Heart left ventricle (tissue), 16 donors: ENCODE measurements at regions of chr17 and their contacts with region 1.

Region 1: GRCh38 chr17:5065227-5065744 is 13.0 kb upstream of the ZFP3 start:
- DNase-seq: no peak
- ATAC-seq: no peak
- H3K4me3 ChIP-seq: no peak overlapping the region
- H3K27ac ChIP-seq: no peak overlapping the region
- H3K4me1 ChIP-seq: no peaks in the 10 kb centered on the region
- H3K27me3 ChIP-seq: no peaks in the 10 kb centered on the region
- CTCF ChIP-seq: no peak
- POLR2A ChIP-seq: no peak

Region 2: DNA sequence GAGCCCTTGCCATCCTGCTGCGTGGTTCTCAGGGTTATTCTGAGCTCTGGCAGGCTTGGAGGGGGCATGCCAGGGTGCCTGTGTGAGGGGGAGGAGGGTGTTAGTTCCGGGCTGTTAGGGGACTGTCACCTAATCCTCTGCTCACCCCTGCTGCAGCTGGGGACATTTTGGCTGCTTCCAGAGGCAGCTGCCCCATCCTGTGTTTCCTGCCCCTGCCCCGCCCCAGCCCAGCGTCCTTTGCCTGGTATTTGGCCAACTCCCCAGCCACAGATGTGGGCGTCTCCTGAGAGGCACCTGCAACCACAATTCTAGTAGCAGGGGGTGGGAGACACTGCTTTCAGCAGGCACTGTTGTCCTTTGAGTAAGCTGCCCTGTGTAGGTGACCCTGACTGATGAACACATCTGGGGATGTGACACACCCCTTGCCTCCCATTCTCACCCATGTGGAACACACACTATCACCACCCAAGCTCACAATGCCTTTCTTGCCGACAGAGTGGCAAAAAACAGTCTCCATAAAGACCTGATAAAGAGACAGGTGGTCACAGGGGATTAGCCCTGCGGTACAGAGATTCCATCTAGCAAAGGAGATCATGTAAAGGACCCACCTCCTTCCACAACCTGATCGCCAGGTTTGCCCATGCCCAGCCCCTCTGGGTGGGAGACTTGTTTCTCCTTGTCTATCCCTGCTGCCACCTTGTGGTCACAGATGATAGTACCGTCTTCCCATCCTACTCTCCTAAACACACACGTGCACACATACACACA is 162.1 kb before region 1 on chr17 and contains the start of gene CHRNE:
- intact Hi-C with region 1: loop called in 7 of 10 experiments (anchors 2 to 10 kb)
- DNase-seq: peak in 4 of 5 donors; percentile 72 to 76 (median 74)
- ATAC-seq: peak in 2 of 4 donors; percentile 35 to 46
- H3K4me3 ChIP-seq: peak within 1 kb of the TSS in 7 of 12 donors; percentile 6 to 57 (median 26)
- H3K27ac ChIP-seq: peak within 1 kb of the TSS in 7 of 12 donors; percentile 33 to 77 (median 63)
- H3K4me1 ChIP-seq: peaks cover 0 to 42% (median 24%) of the 10 kb centered on the region in 12 donors
- H3K27me3 ChIP-seq: peaks cover 0 to 32% (median 11%) of the 10 kb centered on the region in 9 donors
- CTCF ChIP-seq: peak; percentile 68 to 85 (median 74)
- POLR2A ChIP-seq: no peak
- total RNA-seq, gene CHRNE: 0.23 to 1.4 (median 0.48) TPM

Region 3: DNA sequence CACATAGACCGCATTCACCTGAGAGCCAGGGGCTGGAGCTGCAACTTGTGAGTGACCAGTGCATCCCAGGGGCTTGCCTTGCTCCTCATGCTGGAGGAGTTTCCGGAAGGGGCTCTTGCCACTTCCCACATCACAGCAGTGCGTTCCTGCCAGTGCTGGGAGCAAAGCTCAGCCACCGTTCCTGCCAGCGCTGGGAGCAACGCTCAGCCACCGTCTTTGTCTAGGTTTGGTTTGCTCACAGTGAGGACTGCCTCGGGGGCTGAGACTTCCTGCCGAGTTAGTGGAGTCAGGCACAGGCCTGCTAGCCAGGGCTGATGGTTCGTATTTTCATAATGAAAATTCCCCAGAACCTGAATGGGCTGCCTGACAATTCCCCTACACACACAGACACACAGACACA is 157.0 kb before region 1 on chr17:
- intact Hi-C with region 1: loop called (anchors 1 to 10 kb)
- DNase-seq: no peak
- ATAC-seq: peak in 2 of 4 donors; percentile 41 to 48
- H3K4me3 ChIP-seq: no peak overlapping the region
- H3K27ac ChIP-seq: peak overlapping the region in 9 of 12 donors; percentile 1 to 75 (median 60)
- H3K4me1 ChIP-seq: peaks cover 0 to 20% (median 10%) of the 10 kb centered on the region in 12 donors
- H3K27me3 ChIP-seq: no peaks in the 10 kb centered on the region
- CTCF ChIP-seq: no peak
- POLR2A ChIP-seq: no peak

Region 4: DNA sequence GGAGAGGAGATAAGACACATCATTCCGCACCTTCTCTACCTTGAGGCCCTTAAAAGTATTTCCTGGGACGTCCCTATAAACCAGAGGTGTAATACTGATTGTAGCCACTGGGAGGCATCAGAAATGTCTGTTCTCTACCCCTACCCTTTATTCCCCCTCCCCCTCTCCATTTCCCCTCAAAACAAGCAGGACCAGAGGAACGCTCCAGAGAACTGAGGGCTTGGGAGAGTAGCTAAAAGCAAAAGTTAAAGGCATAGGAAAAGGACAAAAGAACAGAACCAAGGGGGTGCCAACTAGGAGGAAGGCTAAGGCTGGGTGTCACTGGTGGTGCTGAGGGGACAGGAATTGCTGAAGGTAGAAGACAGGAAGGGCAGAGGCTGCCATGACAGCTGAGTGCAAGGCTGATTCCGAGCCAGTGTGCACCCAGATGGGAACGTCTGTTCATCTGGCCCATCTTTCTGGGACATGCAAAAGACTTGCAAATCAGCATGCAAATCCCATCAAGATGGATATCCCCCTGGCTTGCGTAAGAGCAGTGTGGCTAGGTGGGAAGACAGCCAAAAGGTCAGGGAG is 84.6 kb before region 1 on chr17:
- intact Hi-C with region 1: loop called in 9 of 10 experiments (anchors 2 to 5 kb)
- DNase-seq: no peak
- ATAC-seq: peak in 3 of 4 donors; percentile 48 to 59 (median 53)
- H3K4me3 ChIP-seq: no peak overlapping the region
- H3K27ac ChIP-seq: no peak overlapping the region
- H3K4me1 ChIP-seq: peaks cover 0 to 43% (median 1%) of the 10 kb centered on the region in 12 donors
- H3K27me3 ChIP-seq: no peaks in the 10 kb centered on the region
- CTCF ChIP-seq: peak; percentile 62 to 77 (median 68)
- POLR2A ChIP-seq: no peak

Region 5: DNA sequence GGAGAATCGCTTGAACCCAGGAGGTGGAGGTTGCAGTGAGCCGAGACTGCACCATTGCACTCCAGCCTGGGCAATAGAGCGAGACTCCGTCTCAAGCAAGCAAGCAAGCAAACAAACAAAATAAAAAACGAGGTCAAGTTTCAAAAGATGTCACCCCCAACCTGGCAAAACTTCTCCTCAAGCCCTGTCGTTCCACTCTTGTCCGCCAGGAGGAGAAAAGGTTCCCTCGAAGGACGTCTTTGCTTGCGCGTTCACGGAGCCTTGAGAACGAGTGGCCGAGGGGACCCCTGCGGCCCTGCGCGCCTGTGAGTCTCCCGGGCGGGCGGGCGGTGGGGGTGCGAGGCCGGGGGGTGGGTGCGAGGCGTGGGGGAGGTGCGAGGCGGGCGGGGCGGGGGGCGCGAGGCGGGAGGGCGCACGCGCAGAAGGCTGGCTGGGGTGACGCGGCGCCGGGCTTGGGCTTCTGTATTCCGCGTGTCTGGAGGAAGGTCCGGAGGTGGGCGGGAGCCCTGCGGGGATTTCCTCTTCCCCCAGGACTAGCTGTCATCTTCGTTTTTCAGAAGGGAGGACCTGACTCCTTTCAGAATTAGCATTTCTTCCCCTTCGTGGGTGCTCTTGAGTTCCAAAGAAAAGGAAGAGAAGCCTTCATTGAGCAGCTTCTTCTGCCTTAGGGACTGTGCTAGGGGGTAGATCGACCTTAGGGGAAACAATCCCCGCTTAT is 33.8 kb before region 1 on chr17:
- intact Hi-C with region 1: loop called in 8 of 10 experiments (anchors 1 to 5 kb)
- DNase-seq: peak; percentile 76 to 89 (median 83)
- ATAC-seq: peak; percentile 19 to 81 (median 77)
- H3K4me3 ChIP-seq: peak overlapping the region in 11 of 12 donors; percentile 30 to 64 (median 54)
- H3K27ac ChIP-seq: peak overlapping the region in 7 of 12 donors; percentile 22 to 54 (median 40)
- H3K4me1 ChIP-seq: peaks cover 0 to 20% (median 3%) of the 10 kb centered on the region in 12 donors
- H3K27me3 ChIP-seq: peaks cover 0 to 19% (median 4%) of the 10 kb centered on the region in 9 donors
- CTCF ChIP-seq: peak; percentile 65 to 83 (median 78)
- POLR2A ChIP-seq: no peak

Region 6: GRCh38 chr17:5181509-5182305 is 116.4 kb after region 1 on chr17:
- intact Hi-C with region 1: no loop called
- DNase-seq: no peak
- ATAC-seq: no peak
- H3K4me3 ChIP-seq: no peak overlapping the region
- H3K27ac ChIP-seq: no peak overlapping the region
- H3K4me1 ChIP-seq: no peaks in the 10 kb centered on the region
- H3K27me3 ChIP-seq: no peaks in the 10 kb centered on the region
- CTCF ChIP-seq: no peak
- POLR2A ChIP-seq: no peak